Mucosa of descending colon (tissue), 3 donors: ENCODE measurements at regions of chr4 and their contacts with region 1.

Region 1: GRCh38 chr4:154618708-154619315 is 6.4 kb upstream of the FGG start:
- DNase-seq: peak in 2 of 3 donors; percentile 73 to 93
- ATAC-seq: peak; percentile 82
- H3K4me3 ChIP-seq: no peak overlapping the region
- H3K4me1 ChIP-seq: peaks cover 19% of the 10 kb centered on the region
- CTCF ChIP-seq: peak; percentile 38

Region 2: DNA sequence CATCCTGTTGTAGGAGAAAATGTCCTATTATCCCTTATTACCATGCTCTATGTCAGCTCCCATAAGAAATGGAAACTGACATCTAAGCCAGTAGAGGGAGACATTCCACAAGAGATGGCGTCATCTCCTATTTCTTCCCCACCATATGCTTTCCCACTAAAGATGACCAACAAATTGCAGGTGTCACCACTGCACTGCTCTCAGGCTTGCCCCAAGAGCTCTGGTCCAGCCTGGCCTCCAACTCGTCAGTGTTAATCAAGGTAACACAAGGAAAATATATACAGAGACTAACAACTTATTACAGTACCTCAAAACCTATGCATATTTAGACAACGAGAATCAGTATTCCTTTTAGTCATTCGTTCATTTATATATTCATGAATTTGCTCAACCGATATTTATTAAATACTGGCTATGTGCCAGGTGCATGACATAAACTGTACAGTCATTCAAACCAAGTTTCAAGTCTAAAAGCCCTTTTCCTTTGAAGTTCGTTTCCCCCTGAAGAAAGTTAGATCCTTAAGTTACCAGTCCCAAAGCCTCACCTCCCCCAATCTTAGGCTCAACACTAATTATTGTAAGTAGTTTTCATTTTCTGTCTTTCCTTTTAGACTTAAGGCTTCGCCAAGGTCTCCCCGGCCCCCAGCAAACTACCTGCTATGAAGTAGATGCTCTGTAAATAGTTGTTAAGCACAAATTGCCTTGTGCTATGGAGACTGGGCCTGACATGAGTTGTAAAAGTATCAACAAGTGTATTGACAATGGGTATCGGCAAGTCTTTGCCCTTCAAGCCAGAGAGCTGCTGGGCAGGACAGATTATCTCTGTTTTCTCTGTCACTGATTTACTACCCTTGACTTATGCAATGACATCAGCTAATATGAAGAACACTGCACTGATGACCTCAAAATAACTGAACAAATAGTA is 59.1 kb before region 1 on chr4:
- intact Hi-C with region 1: loop called (anchors 2 to 10 kb)
- DNase-seq: peak in 2 of 3 donors; percentile 32 to 48
- ATAC-seq: peak; percentile 94
- H3K4me3 ChIP-seq: no peak overlapping the region
- H3K4me1 ChIP-seq: peaks cover 6% of the 10 kb centered on the region
- CTCF ChIP-seq: no peak

Region 3: DNA sequence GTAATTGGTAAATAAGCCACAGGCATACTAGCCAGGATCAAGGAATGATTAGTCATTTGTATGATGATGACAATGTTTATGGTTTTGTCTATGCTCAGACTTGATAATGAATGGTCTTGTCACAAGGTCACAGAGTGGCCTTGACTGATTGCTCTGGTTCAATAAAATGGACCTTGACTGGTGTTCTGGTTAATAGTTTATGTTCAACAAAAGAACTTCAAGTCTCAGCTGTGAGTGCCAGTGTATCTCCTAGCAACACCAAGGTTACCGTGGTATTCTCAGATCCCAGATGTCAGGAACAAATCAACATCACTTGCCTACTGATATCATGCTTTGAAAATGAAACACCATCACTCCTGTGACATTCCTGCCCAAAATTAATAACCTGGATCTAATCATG is 108.7 kb after region 1 on chr4:
- intact Hi-C with region 1: no loop called
- DNase-seq: no peak
- ATAC-seq: no peak
- H3K4me3 ChIP-seq: no peak overlapping the region
- H3K4me1 ChIP-seq: no peaks in the 10 kb centered on the region
- CTCF ChIP-seq: no peak